Ovary (tissue), 10 donors: ENCODE measurements at regions of chr1 and their contacts with region 1.

Region 1: DNA sequence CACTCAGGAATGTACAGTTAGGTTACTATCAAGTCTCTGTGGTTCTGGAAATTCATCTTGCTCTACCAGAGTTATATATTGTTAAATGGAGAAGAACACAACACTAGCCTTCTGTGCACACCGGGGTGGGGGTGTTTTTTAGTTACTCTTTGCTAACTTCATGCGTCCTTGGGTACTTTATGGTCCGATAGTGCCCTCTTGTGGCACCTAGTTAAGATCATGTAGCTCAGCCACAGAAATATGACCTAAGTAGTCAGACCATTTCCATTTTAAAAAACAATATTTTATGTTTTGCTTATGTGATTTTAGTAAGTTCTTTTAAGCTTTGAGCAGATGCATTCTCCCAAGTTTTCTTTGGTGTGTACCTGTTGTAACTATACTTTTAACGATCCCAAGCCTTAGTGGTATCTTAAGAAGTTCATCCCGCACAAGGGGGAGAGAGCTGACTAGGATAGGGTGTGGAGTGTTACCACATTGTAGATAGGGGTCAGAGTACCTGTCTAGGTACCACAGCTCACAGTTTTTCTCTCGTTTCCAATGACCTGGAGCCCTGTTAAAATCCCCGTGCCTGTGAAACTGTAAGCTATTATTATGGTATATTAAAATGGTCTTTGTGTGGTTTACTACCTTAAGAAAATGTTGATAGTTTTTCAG is 20.6 kb upstream of the SH3D21 start:
- DNase-seq: peak in 4 of 5 donors; percentile 42 to 79 (median 66)
- H3K4me3 ChIP-seq: no peak overlapping the region
- H3K27ac ChIP-seq: no peak overlapping the region
- H3K4me1 ChIP-seq: no peaks in the 10 kb centered on the region
- H3K27me3 ChIP-seq: no peaks in the 10 kb centered on the region
- CTCF ChIP-seq: peak; percentile 50 to 89 (median 74)
- EP300 ChIP-seq: no peak
- POLR2A ChIP-seq: no peak

Region 2: GRCh38 chr1:36099681-36100341 is 185.8 kb before region 1 on chr1:
- intact Hi-C with region 1: loop called in 1 of 4 experiments (anchors 5 kb)
- DNase-seq: peak; percentile 62 to 86 (median 80)
- H3K4me3 ChIP-seq: no peak overlapping the region
- H3K27ac ChIP-seq: no peak overlapping the region
- H3K4me1 ChIP-seq: no peaks in the 10 kb centered on the region
- H3K27me3 ChIP-seq: no peaks in the 10 kb centered on the region
- CTCF ChIP-seq: peak; percentile 56 to 83 (median 80)
- EP300 ChIP-seq: no peak
- POLR2A ChIP-seq: no peak

Region 3: DNA sequence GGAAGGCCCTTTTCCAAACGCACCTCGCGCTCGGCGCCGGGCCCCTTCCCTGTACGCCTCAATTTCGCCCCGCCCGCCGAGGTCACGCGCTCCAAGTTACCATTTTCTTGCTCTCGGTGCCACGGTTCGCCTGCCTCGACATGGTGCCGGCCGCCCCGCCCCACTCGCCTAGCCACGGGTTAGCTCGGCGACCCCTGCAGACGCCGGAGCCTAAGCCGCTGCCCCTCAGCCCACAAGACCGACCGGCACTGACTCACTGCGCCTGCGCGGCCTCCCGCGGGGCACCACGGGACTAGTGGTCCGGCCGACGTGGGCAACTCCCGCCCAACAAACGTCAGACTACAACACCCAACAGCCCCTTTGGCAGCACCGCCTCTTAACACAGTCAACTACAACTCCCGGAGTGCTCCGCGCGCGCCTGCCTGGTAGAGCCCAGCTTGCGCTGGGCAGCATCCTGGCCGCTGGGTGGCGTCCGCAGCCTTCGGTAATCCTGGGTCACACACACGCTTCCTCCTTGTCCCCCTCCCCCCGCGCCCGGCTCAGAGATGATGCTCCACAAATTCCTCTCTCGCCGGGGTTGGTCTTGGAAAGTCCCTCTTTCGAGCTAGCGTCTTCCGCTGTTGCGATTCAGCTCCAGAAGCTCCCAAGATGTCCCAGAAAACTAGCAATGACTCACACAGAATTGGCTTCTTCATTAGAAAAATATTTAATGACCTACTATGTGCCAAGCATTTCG is 136.2 kb before region 1 on chr1 and contains the start of gene TRAPPC3:
- intact Hi-C with region 1: loop called in 2 of 4 experiments (anchors 10 kb)
- DNase-seq: peak; percentile 100
- H3K4me3 ChIP-seq: peak within 1 kb of the TSS; percentile 68
- H3K27ac ChIP-seq: peak within 1 kb of the TSS; percentile 72 to 74
- H3K4me1 ChIP-seq: peaks cover 6% of the 10 kb centered on the region
- H3K27me3 ChIP-seq: no peaks in the 10 kb centered on the region
- CTCF ChIP-seq: peak; percentile 89 to 99 (median 97)
- EP300 ChIP-seq: peak; percentile 19
- POLR2A ChIP-seq: peak; percentile 86
- total RNA-seq, gene TRAPPC3: 42.3 to 49.6 (median 45.2) TPM

Region 4: GRCh38 chr1:36155408-36156328 is 129.9 kb before region 1 on chr1 and contains the start of gene MAP7D1:
- intact Hi-C with region 1: loop called in 3 of 4 experiments (anchors 5 to 10 kb)
- DNase-seq: peak; percentile 91 to 93 (median 92)
- H3K4me3 ChIP-seq: peak within 1 kb of the TSS; percentile 93
- H3K27ac ChIP-seq: peak within 1 kb of the TSS; percentile 97 to 98
- H3K4me1 ChIP-seq: peaks cover 17% of the 10 kb centered on the region
- H3K27me3 ChIP-seq: no peaks in the 10 kb centered on the region
- CTCF ChIP-seq: no peak
- EP300 ChIP-seq: no peak
- POLR2A ChIP-seq: peak; percentile 69
- total RNA-seq, gene MAP7D1: 34.9 to 99.1 (median 69.0) TPM

Region 5: DNA sequence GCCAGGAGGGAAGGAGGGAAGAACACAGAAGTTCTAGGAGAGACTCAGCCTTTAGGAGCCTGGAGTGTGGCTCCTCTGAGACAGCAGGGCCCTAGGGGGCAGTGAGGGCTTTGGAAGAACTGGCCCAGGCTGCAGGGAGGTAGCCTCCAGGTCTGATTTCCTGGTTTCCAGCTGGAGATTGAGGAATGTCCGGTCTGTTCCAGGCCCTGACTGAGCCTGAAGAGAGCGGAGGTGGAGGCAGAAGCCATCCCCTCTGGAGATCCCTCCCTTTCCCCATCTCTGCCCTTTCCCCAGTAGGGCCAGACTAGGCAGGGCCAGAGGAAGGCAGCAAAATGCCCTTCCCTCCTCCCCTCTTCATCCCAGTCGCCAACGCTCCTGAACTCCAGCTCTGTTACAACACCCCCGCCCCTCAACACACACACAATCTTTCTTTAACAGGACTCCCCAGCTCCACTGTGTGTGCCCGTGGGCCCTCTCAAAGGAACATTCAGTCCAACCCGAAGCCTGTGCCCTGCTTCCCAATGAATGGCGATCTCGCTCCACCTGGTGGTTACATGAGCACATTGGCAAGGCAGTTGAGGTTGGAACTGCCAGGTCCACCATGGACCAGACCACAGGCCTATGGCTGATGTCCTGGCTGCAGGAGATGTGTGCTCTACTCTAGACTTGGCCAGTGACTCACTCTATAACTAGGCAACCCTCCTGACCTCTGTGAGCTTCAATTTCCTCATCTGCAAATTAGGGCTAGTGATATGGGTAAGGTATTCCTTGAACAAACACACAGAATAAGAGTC is 97.6 kb before region 1 on chr1:
- intact Hi-C with region 1: loop called in 1 of 4 experiments (anchors 10 kb)
- DNase-seq: peak; percentile 77 to 85 (median 82)
- H3K4me3 ChIP-seq: no peak overlapping the region
- H3K27ac ChIP-seq: peak overlapping the region; percentile 47 to 55
- H3K4me1 ChIP-seq: peaks cover 4% of the 10 kb centered on the region
- H3K27me3 ChIP-seq: no peaks in the 10 kb centered on the region
- CTCF ChIP-seq: peak; percentile 67 to 90 (median 89)
- EP300 ChIP-seq: no peak
- POLR2A ChIP-seq: peak; percentile 5

Region 6: DNA sequence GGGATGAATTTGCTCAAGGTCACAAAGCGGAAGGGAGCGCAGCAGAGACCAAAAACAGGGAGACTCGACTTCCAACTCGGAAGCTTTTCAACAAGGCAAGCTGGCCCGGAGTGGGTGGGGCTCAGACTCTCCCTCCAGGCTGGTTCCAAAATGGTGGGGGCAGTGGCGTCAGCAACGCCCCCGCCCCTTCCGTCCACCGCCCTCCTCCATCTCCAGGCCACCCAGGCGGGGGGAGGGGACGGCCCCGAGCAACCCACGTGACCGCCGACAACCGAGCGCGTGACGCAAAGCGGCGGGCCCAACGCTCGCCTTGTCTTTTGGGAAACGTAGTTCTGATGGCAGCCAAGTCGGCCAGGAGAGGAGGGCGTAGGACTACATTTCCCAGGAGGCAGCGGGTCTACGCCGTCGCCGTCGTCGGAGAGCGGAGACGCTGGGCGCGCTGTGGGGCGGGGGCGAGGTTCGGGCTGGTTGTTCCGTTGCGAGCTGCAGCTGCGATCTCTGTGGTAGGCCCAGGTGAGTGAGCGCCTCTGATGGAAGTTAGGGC is 61.5 kb before region 1 on chr1 and contains the start of gene THRAP3:
- intact Hi-C with region 1: loop called in 1 of 4 experiments (anchors 10 kb)
- DNase-seq: peak; percentile 99 to 100 (median 100)
- H3K4me3 ChIP-seq: peak within 1 kb of the TSS; percentile 95
- H3K27ac ChIP-seq: peak within 1 kb of the TSS; percentile 78 to 93
- H3K4me1 ChIP-seq: peaks cover 5% of the 10 kb centered on the region
- H3K27me3 ChIP-seq: no peaks in the 10 kb centered on the region
- CTCF ChIP-seq: no peak
- EP300 ChIP-seq: peak; percentile 94
- POLR2A ChIP-seq: peak; percentile 99
- total RNA-seq, gene THRAP3: 49.2 to 101 (median 92.6) TPM

Region 7: DNA sequence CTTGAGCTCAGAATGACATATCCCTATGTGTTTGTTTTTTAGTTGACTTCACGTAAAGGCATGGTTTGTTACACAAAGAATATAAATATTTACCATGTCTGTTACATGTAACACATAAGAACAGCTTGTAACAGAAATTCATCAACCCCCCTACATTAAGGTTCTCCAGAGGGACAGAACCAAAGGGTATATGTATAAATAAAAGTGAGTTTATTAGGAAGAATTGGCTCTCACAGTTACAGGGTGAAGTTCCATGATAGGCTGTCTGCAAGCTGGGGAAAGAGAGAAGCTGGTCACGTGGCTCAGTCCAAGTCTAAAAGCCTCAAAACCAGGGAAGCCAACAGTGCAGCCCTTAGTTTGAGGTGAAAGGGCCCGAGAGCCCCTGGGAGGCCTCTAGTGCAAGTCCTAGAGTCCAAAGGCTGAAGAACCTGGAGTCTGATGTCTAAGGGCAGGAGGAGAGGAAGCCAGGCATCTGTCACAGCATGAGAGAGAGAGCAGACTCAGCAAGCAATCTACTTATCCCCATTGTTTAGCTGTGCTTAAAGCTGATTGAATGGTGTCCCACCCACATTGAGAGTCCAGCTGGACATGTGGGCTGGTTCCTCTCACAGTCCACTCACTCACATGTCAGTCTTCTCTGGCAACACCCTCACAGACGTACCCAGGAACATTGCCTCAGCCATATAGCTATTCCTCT is 45.5 kb before region 1 on chr1:
- intact Hi-C with region 1: loop called in 1 of 4 experiments (anchors 10 kb)
- DNase-seq: no peak
- H3K4me3 ChIP-seq: no peak overlapping the region
- H3K27ac ChIP-seq: no peak overlapping the region
- H3K4me1 ChIP-seq: peaks cover 2% of the 10 kb centered on the region
- H3K27me3 ChIP-seq: no peaks in the 10 kb centered on the region
- CTCF ChIP-seq: no peak
- EP300 ChIP-seq: no peak
- POLR2A ChIP-seq: no peak

Region 8: DNA sequence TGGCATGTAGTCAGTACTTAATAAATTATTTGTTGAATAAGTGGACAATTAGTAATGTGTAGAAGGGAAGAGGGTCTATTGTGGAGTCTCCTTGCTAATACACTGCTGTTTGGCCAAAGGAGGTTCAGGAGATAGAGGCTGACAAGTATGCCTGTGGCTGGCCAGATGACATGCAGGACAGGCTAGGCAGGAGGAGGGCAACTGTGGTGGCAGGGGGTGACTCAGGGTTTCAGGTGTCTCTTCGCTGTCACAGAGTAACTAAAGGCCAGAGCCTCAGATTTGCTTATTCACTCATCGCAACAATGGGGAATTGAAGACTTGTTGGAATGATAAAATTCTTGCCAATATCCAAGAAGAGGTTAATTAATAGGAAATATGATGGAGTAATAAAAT is 28.2 kb before region 1 on chr1:
- intact Hi-C with region 1: no loop called
- DNase-seq: no peak
- H3K4me3 ChIP-seq: no peak overlapping the region
- H3K27ac ChIP-seq: no peak overlapping the region
- H3K4me1 ChIP-seq: peaks cover 6% of the 10 kb centered on the region
- H3K27me3 ChIP-seq: no peaks in the 10 kb centered on the region
- CTCF ChIP-seq: no peak
- EP300 ChIP-seq: no peak
- POLR2A ChIP-seq: no peak